MCF 10A (cell line): ENCODE measurements at regions of chrX and their contacts with region 1.

Region 1: DNA sequence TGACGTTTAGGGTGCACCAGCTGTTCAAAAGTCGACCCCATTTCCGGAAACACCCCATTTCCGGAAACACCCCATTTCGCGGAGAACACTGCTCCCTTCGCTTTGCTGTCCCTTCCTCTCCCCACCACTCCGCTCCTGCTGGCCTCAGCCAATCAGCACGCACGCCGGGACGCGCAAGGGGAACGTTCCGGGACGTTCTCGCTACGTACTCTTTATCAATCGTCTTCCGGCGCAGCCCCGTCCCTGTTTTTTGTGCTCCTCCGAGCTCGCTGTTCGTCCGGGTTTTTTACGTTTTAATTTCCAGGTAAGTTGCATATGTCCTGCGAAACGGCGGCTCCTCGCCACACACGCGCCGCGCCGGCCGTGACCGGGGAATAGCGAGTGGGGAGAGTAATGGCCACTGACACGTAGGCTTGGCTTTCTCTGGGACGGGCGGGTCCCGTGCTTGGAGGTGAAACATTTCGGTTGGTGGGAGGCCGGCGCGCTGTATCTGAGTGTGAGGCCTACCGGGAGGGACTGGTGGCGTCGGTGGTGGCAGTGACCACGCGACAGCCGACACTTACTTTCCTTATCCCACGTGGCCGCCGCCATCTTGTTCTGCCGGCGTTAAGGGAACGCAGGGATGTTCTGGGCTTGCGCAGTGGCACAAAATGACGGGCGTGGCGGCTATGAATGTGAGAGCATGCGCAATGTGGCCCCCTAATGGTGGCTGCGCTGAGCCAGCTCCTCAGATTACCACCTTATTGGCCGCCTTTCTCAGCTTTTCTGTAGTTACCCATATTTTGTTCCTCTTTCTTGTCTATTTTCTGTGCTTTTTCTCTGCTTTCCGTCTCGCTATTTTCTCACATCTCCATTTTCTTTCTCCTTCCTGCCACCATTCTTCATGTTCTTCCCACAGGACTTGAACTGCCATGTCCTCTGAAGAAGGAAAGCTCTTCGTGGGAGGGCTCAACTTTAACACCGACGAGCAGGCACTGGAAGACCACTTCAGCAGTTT is at the start of gene RBM3:
- DNase-seq: peak; percentile 88
- H3K4me3 Mint-ChIP-seq: peak within 1 kb of the TSS; percentile 77
- H3K27ac Mint-ChIP-seq: peak within 1 kb of the TSS; percentile 100
- H3K4me1 Mint-ChIP-seq: peaks cover 6% of the 10 kb centered on the region
- H3K27me3 Mint-ChIP-seq: no peaks in the 10 kb centered on the region
- CTCF ChIP-seq: no peak
- total RNA-seq, gene RBM3: 318 and 354 TPM in 2 replicates

Region 2: GRCh38 chrX:48521353-48522243 is 53.0 kb before region 1 on chrX and contains the start of gene EBP:
- CTCF ChIA-PET with region 1: no interaction called
- POLR2A ChIA-PET with region 1: interaction called, 12 read pairs
- intact Hi-C with region 1: no loop called
- DNase-seq: peak; percentile 95
- H3K4me3 Mint-ChIP-seq: peak within 1 kb of the TSS; percentile 77
- H3K27ac Mint-ChIP-seq: peak within 1 kb of the TSS; percentile 57
- H3K4me1 Mint-ChIP-seq: no peaks in the 10 kb centered on the region
- H3K27me3 Mint-ChIP-seq: no peaks in the 10 kb centered on the region
- CTCF ChIP-seq: no peak
- total RNA-seq, gene EBP: 66.9 and 102 TPM in 2 replicates

Region 3: DNA sequence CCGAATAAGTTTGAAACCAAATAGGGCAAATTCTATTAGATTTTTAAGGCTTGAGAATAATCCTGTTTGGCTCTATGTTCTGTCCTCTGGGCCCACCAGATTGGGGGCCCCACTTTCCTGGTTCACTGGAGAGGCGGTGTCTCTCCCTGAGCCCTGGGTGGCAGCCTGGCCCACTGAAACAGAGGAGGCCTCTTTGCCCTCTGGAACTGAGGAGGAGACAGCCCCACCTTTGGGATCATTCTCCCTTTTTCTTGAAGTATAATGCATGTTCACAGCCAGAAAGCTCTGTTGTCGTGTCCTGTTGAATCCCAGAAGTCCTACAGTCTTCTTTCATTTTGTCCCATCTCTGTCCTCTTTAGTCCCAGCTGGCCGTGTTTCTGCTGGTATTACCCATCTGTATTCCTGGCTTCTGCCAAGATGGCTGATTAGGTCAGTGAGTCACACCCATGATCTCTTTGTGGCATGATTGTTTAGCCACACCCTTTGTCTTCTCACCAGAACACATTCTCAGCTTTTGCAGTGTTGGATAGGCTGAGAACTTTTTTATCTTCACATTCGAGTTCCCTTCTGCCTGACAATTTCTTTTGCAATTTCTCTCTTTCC is 43.1 kb before region 1 on chrX:
- CTCF ChIA-PET with region 1: no interaction called
- POLR2A ChIA-PET with region 1: interaction called, 9 read pairs
- intact Hi-C with region 1: loop called (anchors 2 kb)
- DNase-seq: peak; percentile 77
- H3K4me3 Mint-ChIP-seq: peak overlapping the region; percentile 9
- H3K27ac Mint-ChIP-seq: peak overlapping the region; percentile 95
- H3K4me1 Mint-ChIP-seq: peaks cover 15% of the 10 kb centered on the region
- H3K27me3 Mint-ChIP-seq: no peaks in the 10 kb centered on the region
- CTCF ChIP-seq: no peak

Region 4: DNA sequence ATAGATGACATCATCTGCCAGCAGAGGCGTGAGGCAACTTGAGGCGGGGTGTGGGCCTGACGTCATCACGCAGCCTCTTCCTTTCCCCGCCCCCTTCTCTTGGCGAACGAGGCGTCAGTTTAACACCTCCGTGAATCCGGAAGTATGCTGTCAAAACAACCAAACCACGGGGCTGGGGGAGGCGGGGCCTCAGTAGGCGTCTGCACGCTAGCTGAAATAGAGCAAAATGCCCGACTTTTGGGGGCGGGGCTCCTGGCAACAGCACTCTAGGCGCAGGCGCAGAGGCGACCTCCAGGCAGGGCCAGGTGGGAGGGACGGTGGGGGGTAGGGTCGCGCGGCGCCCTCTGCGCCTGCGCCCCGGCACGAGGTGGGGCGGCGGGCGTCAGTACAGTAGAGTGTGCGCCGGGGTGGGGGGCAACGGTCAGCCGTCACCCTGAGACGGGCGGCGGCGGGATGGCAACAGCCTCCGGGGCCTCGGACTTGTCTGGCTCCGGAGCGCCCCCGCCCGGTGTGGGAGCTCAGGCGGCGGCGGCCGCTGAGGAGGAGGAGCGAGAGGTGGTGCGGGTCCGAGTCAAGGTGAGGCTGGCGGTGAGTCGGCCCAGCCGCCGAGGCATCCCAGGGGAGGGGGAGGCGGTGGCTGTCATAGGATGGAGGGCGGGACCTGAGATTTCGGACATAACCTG is 35.1 kb before region 1 on chrX and contains the start of gene TBC1D25:
- CTCF ChIA-PET with region 1: no interaction called
- POLR2A ChIA-PET with region 1: interaction called, 17 read pairs
- intact Hi-C with region 1: loop called (anchors 1 kb)
- DNase-seq: peak; percentile 96
- H3K4me3 Mint-ChIP-seq: peak within 1 kb of the TSS; percentile 83
- H3K27ac Mint-ChIP-seq: peak within 1 kb of the TSS; percentile 87
- H3K4me1 Mint-ChIP-seq: peaks cover 11% of the 10 kb centered on the region
- H3K27me3 Mint-ChIP-seq: no peaks in the 10 kb centered on the region
- CTCF ChIP-seq: peak; percentile 42
- total RNA-seq, gene TBC1D25: 14.4 and 18.2 TPM in 2 replicates

Region 5: GRCh38 chrX:48589482-48590162 is 15.1 kb after region 1 on chrX:
- CTCF ChIA-PET with region 1: interaction called, 6 read pairs
- POLR2A ChIA-PET with region 1: interaction called, 38 read pairs
- intact Hi-C with region 1: loop called (anchors 2 kb)
- DNase-seq: peak; percentile 81
- H3K4me3 Mint-ChIP-seq: peak overlapping the region; percentile 70
- H3K27ac Mint-ChIP-seq: peak overlapping the region; percentile 90
- H3K4me1 Mint-ChIP-seq: peaks cover 7% of the 10 kb centered on the region
- H3K27me3 Mint-ChIP-seq: no peaks in the 10 kb centered on the region
- CTCF ChIP-seq: no peak

Region 6: GRCh38 chrX:48597353-48598264 is 23.0 kb after region 1 on chrX and contains the start of gene WDR13:
- CTCF ChIA-PET with region 1: interaction called, 3 read pairs
- POLR2A ChIA-PET with region 1: interaction called, 10 read pairs
- intact Hi-C with region 1: loop called (anchors 1 kb)
- DNase-seq: peak; percentile 87
- H3K4me3 Mint-ChIP-seq: peak within 1 kb of the TSS; percentile 90
- H3K27ac Mint-ChIP-seq: peak within 1 kb of the TSS; percentile 100
- H3K4me1 Mint-ChIP-seq: no peaks in the 10 kb centered on the region
- H3K27me3 Mint-ChIP-seq: no peaks in the 10 kb centered on the region
- CTCF ChIP-seq: no peak
- total RNA-seq, gene WDR13: 134 and 138 TPM in 2 replicates